GM10248 (cell line): ENCODE measurements at regions of chr14 and their contacts with region 1.

Region 1: DNA sequence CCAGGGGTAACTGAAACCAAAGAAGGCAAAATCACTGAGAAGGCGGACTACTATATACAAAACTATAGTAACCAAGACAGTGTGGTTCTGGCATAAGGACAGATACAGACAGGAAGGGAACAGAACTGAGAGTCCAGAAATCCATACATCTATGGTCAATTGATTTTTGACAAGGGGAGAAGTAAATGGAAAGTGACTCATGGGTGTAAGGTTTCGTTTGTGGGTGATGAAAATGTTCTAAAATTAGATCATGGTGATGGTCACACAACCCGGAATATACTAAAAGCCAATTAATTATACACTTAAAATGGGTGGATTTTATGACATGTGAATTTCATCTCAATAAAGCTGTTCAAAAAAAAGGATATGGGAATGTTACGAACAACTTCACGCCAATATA is 18.7 kb downstream of the ANGEL1 start:
- DNase-seq: no peak
- CTCF ChIP-seq: no peak

Region 2: DNA sequence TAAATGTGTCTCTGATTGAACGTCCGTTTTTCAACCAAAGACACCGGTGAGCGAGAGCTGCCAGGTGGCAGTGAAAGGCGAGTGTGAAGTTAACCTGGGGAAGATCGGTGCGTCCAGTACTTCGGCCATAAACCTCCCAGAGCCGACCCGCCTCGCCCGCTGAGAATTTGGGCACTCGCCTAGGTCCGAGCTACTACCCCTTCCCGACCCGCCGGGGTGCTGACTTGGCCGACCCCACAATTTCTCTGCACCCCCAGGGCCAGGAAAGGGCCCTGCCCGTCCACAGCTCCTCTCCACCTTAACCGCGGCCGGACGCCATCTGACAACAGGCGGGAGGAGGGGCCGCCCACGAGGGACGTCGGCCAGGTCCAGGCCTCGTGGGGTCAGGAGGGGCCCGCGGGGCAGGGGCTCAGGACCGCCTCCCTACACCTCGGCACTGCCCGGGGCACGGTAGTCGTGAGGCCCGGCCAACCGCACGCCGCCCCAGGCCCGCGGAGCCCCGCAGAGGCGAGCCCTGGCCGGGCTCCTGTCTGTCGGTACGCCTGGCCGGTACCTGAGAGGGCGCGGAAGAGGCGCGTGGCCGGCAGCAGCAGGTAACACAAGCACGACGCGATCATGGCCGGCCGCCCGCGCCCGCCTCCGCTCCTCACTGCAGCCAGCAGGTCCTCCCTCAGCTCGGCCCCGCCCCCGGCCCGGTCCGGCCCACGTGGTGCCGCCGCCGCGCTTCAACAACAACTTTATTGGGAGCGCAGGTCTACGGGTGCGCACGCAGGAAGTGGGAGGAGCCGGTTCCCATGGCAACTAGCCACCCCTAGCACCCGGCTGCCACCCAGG is 18.5 kb after region 1 on chr14 and contains the start of gene ANGEL1:
- CTCF ChIA-PET with region 1: interaction called, 13 read pairs
- POLR2A ChIA-PET with region 1: no interaction called
- DNase-seq: peak; percentile 93
- CTCF ChIP-seq: no peak